ENCODE measurements at regions of chr9 and their contacts with region 1.

Region 1: DNA sequence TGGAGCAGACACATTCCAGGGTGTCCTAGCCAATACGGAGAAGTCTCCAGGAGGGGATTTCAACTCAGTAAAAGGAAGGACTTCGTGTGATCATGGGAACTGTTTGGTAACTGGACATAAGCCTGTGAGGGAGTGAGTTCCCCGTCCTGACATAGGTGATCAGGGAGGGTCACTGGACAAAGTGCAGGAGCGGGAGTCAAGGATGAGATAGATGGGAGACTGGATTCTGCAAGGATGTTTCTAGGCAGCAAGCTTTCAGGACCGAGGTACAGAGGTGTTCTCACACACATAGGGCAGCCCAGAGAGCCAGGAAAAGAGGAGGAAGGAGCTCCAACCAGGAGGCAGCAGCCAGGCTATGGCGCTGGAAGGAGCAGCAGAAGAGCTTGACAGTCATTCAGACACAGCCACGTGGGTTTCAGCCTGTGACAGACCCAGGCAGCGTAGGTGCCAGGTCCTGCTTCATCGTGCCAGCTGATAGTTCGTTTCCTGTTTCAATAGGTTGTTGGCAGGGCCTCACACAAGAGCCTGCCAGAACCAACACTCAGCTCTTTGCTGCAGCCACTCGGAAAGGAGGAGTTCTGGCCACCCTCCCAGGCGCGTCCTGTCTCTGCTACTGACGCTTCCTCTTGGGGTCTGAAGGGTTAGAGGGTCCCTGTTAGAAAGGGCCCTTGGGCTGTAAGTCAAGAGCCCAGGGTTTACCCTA is 84.1 kb downstream of the AMBP start:
- DNase-seq: peak; percentile 77 to 84
- ATAC-seq: peak; percentile 87 to 88
- H3K4me3 ChIP-seq: peak overlapping the region in 2 of 4 donors; percentile 10 to 23
- H3K27ac ChIP-seq: peak overlapping the region; percentile 39 to 71 (median 58)
- H3K4me1 ChIP-seq: peaks cover 28 to 37% of the 10 kb centered on the region in 2 donors
- H3K27me3 ChIP-seq: no peaks in the 10 kb centered on the region
- CTCF ChIP-seq: no peak
- POLR2A ChIP-seq: peak in 1 of 2 donors; percentile 33

Region 2: GRCh38 chr9:113853324-113853723 is 140.7 kb before region 1 on chr9:
- in situ Hi-C with region 1: no loop called
- intact Hi-C with region 1: loop called (anchors 5 kb)
- DNase-seq: no peak
- ATAC-seq: no peak
- H3K4me3 ChIP-seq: no peak overlapping the region
- H3K27ac ChIP-seq: no peak overlapping the region
- H3K4me1 ChIP-seq: no peaks in the 10 kb centered on the region
- H3K27me3 ChIP-seq: no peaks in the 10 kb centered on the region
- CTCF ChIP-seq: peak in 3 of 5 experiments; percentile 34 to 53 (median 38)
- POLR2A ChIP-seq: no peak

Region 3: DNA sequence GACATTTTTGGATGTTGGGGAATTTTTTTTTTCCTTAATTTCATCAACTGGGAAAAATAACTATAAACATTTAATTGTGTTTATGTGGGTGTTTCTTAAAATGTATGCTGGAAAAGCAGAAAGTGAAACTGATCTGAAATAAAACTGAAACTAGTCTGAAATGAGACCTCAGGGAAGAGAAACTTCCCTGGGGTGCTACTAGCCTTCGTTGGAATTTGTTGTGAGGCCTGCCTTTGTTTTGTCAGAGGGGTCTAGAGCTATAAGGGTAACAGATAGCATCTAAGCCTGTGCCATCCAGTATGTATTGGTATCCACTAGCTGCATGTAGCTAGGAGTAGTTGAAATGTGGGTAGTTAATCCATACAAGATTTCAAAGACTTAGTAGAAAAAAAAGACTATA is 107.5 kb before region 1 on chr9:
- in situ Hi-C with region 1: no loop called
- intact Hi-C with region 1: loop called (anchors 5 kb)
- DNase-seq: no peak
- ATAC-seq: peak in 1 of 2 donors; percentile 37
- H3K4me3 ChIP-seq: peak overlapping the region; percentile 14 to 55 (median 26)
- H3K27ac ChIP-seq: peak overlapping the region in 3 of 4 donors; percentile 57 to 63 (median 58)
- H3K4me1 ChIP-seq: peaks cover 39% of the 10 kb centered on the region in 2 donors
- H3K27me3 ChIP-seq: no peaks in the 10 kb centered on the region
- CTCF ChIP-seq: no peak
- POLR2A ChIP-seq: no peak